ENCODE measurements at regions of chr21 and their contacts with region 1.

Region 1: GRCh38 chr21:44817506-44817880 is 369 bp downstream of the SUMO3 start:
- DNase-seq: peak; percentile 98
- H3K4me3 ChIP-seq: peak overlapping the region; percentile 51 to 82 (median 64)
- H3K27ac ChIP-seq: peak overlapping the region; percentile 86 to 96 (median 95)
- H3K4me1 ChIP-seq: peaks cover 10 to 58% (median 34%) of the 10 kb centered on the region in 6 donors
- H3K27me3 ChIP-seq: no peaks in the 10 kb centered on the region
- CTCF ChIP-seq: no peak
- POLR2A ChIP-seq: no peak

Region 2: GRCh38 chr21:44785620-44786335 is 31.7 kb before region 1 on chr21:
- intact Hi-C with region 1: no loop called
- DNase-seq: no peak
- H3K4me3 ChIP-seq: no peak overlapping the region
- H3K27ac ChIP-seq: no peak overlapping the region
- H3K4me1 ChIP-seq: peaks cover 0 to 48% (median 20%) of the 10 kb centered on the region in 6 donors
- H3K27me3 ChIP-seq: no peaks in the 10 kb centered on the region
- CTCF ChIP-seq: no peak
- POLR2A ChIP-seq: no peak

Region 3: DNA sequence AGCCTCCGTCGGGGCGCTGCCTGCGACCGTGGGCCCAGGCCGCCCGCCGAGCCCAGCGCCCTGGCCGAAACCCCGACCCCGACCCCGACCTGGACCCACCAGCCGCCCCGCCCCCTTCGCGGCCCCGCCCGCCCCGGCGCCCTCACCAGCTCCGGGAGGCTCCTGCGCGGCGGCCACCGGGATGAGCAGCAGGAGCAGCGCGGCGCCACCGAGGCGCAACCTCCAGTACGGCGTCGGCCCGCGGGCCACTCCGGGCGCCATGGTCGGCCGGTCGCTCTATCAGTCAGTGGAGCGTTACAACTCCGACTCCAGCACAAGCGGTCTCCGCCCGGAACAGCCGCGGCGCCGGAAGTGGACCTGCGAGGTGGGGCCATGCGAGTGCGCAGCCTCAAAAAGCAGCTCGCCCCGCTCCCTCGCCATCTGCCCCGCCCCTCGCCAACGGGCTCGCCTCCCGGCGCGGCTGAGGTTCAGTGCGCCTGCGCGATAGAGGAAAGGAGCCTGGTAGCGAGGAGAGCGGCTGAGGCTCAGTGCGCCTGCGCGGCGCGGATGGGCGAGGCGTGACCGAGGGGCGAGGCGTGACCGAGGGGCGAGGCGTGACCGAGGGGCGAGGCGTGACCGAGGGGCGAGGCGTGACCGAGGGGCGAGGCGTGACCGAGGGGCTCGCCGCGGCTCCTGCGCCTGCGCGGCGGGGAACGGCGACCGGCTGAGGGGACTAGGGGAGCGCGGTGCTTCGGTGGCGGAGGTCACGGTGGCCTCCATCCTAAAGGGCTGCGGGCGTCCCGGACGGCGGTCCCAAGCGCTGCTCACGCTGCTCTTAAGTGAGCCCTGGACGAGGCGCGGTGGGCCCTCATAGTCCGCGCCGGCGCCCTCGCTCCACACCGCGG is 56.1 kb after region 1 on chr21 and contains the start of gene PTTG1IP:
- intact Hi-C with region 1: loop called (anchors 5 kb)
- DNase-seq: peak; percentile 100
- H3K4me3 ChIP-seq: peak within 1 kb of the TSS; percentile 69 to 98 (median 90)
- H3K27ac ChIP-seq: peak within 1 kb of the TSS; percentile 95 to 100 (median 97)
- H3K4me1 ChIP-seq: peaks cover 51 to 91% (median 73%) of the 10 kb centered on the region in 6 donors
- H3K27me3 ChIP-seq: no peaks in the 10 kb centered on the region
- CTCF ChIP-seq: peak in 1 of 11 experiments; percentile 32
- POLR2A ChIP-seq: peak in 2 of 3 donors; percentile 33 to 73
- total RNA-seq, gene PTTG1IP: 121 to 189 (median 165) TPM